WTC11 (cell line): ENCODE measurements at regions of chr20 and their contacts with region 1.

Region 1: DNA sequence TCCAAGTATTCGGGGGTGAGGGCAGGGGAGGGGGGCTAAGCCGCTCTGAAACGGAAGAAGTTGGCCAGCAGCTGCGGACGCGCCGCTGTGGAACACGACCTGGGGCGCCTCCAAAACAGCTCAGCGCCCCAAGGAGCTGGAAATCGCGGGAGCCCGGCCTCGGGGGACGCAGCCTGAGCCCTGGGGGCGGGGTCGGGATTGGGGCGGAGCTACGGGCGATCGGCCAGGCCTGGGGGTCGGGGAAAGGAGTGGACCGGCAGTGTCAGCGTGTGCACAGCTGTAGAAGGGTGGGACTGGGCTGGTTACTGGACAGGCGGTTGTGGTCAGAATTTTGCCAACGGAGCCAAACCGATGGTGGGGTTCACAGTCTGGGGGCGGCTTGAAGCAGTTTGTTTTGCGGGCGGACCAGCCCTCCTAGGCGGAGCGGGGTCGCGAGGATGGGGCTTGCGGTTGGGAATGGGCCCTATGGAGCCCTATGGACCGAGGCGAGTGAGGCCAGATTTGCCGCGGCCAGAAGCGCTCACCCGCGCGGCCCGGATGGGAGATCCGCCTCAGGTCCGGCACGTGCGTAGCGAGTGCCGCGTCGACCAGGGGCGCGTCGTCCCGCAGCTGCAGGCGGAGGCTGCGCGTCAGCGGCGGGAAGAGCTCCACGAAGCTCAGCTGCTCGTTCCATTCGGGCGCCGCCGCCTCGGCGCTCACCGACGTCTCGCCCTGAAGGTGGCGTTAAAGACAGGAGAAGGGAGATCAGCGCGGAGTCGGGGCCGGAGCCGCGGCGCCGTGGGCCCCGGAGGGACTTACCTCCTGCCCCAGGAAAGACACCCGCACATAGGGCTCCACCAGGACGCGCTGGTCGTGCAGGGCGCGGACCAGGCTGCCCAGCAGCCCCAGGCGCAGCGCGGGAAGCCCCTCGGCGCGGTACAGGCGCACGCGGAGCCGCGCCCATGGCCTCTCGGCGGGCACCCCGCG is 14.3 kb upstream of the SPAG4 start:
- DNase-seq: peak; percentile 80
- ATAC-seq: peak; percentile 63
- H3K4me3 Mint-ChIP-seq: peak overlapping the region; percentile 76
- H3K27ac Mint-ChIP-seq: no peak overlapping the region
- H3K4me1 Mint-ChIP-seq: peaks cover 9% of the 10 kb centered on the region
- H3K27me3 Mint-ChIP-seq: peaks cover 74% of the 10 kb centered on the region
- CTCF ChIP-seq: no peak

Region 2: GRCh38 chr20:35541783-35542588 is 59.3 kb before region 1 on chr20 and contains the start of gene ERGIC3:
- CTCF ChIA-PET with region 1: interaction called, 20 read pairs
- POLR2A ChIA-PET with region 1: interaction called, 3 read pairs
- DNase-seq: peak; percentile 100
- ATAC-seq: peak; percentile 85
- H3K4me3 Mint-ChIP-seq: peak within 1 kb of the TSS; percentile 83
- H3K27ac Mint-ChIP-seq: peak within 1 kb of the TSS; percentile 88
- H3K4me1 Mint-ChIP-seq: peaks cover 16% of the 10 kb centered on the region
- H3K27me3 Mint-ChIP-seq: no peaks in the 10 kb centered on the region; the same call in 1 of the 2 replicates
- CTCF ChIP-seq: no peak
- total RNA-seq, gene ERGIC3: 168 to 181 TPM (median 179 TPM) in 3 replicates

Region 3: GRCh38 chr20:35568645-35569262 is 32.5 kb before region 1 on chr20:
- CTCF ChIA-PET with region 1: interaction called, 12 read pairs
- POLR2A ChIA-PET with region 1: no interaction called
- DNase-seq: peak; percentile 44
- ATAC-seq: peak; percentile 95
- H3K4me3 Mint-ChIP-seq: no peak overlapping the region
- H3K27ac Mint-ChIP-seq: no peak overlapping the region; the same call in 1 of the 2 replicates
- H3K4me1 Mint-ChIP-seq: no peaks in the 10 kb centered on the region
- H3K27me3 Mint-ChIP-seq: peaks cover 8% of the 10 kb centered on the region
- CTCF ChIP-seq: no peak

Region 4: DNA sequence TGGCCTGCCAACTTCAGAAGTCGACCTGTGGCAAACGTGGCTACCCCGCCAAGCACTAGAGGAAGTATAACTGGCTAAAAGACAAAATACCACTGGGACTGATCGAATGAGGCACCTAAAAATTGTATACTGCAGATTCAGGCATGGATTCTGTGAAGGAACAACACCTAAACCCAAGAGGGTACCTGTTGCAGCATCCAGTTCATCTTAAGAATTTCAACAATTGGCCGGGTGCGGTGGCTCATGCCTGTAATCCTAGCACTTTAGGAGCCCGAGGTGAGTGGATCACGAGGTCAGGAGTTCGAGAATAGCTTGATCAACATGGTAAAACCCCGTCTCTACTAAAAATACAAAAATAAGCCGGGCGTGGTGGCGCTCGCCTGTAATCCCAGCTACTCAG is 12.9 kb before region 1 on chr20:
- CTCF ChIA-PET with region 1: interaction called, 11 read pairs
- POLR2A ChIA-PET with region 1: interaction called, 3 read pairs
- DNase-seq: no peak
- ATAC-seq: no peak
- H3K4me3 Mint-ChIP-seq: no peak overlapping the region
- H3K27ac Mint-ChIP-seq: peak overlapping the region; percentile 82
- H3K4me1 Mint-ChIP-seq: peaks cover 4% of the 10 kb centered on the region; the same call in 1 of the 2 replicates
- H3K27me3 Mint-ChIP-seq: no peaks in the 10 kb centered on the region
- CTCF ChIP-seq: no peak

Region 5: DNA sequence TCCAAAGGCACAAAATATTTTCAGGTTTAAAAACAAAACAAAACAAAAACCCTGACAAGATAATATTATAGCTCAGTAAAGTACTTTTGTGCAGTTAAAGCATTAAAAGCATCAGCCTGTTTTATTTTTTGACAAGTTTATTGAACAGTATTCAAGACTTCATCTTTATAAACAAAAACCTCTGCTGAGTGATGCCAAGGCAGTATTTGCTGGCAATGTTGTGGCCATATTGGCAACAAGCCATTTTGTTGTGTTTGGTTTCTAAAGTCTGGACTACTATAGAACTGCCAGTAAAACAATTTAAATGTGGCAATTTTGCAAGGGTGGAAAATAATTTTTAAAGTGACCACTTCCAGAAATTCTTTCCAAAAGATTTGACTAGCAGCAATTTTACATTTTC is 47.5 kb after region 1 on chr20:
- CTCF ChIA-PET with region 1: no interaction called
- POLR2A ChIA-PET with region 1: no interaction called
- DNase-seq: no peak
- ATAC-seq: no peak
- H3K4me3 Mint-ChIP-seq: no peak overlapping the region
- H3K27ac Mint-ChIP-seq: no peak overlapping the region; the same call in 1 of the 2 replicates
- H3K4me1 Mint-ChIP-seq: peaks cover 14% of the 10 kb centered on the region
- H3K27me3 Mint-ChIP-seq: no peaks in the 10 kb centered on the region
- CTCF ChIP-seq: no peak